AG04449 (cell line): ENCODE measurements at regions of chr21 and their contacts with region 1.

Region 1: DNA sequence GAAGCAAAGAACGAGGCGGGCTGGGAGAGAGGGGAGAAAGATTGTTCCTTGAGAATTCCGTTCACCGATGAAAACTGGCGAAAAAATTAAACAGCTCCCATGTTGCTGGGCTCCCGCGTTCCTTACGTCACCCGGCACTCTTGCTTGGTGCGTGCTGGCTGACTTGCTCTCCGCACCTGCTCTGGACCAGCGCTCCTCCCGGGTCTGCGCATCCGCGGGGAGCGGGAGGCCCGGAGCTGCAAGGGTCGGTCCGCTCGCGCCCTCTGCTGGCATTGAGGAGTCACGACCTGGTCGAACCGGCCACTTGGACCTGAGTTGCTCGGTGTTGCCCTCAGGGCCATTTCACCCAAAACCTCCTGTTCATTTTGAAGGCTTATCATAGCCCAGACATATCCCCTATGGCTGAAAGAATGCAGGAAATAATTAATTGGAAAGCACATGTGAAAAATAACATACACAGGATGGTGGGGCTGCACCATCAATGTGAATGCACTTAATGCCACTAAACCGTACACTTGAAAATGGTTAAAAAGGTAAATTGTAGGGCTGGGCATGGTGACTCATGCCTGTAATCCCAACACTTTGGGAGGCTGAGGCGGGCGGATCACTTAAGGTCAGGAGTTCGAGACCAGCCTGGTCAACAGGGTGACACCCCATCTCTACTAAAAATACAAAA is 98.9 kb upstream of the BACE2 start:
- DNase-seq: no peak
- H3K4me3 ChIP-seq: no peak overlapping the region; the same call in 1 of the 2 replicates
- CTCF ChIP-seq: peak; percentile 98

Region 2: DNA sequence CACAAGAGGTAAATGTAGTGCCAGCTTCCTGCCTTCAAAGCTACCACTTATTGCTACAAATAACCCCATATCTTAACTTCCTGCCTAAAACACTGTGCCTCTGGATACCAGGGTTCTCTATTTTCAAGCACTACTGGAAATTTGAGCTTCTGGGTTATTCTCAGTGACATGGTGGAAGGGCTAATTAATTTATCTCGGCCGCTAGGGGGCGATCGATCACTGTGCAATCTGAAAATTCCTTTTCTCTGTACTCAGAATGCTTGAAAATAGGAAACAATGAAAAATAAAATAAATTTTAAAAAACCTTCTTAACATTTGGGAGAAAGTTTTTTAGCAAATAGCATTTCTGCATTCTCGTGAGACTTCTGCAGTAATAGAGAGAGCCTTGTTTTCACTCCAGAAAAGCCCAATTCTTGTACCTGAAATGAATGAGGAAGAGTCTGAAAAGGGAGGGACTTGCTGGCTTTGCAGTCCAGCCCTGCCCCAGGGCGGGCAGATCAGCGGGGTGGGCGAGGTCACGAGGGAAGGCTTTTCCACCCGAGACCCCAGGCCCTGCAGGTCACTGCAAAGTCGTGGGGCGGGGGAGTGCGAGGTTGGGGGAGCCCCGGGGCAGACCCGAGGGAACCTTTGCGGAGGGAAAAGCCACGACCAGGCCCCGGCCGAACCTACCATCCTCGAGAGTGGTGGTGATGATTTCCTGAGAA is 925.1 kb before region 1 on chr21:
- CTCF ChIA-PET with region 1: interaction called, 15 read pairs
- POLR2A ChIA-PET with region 1: no interaction called
- DNase-seq: no peak
- H3K4me3 ChIP-seq: no peak overlapping the region
- CTCF ChIP-seq: peak; percentile 40

Region 3: DNA sequence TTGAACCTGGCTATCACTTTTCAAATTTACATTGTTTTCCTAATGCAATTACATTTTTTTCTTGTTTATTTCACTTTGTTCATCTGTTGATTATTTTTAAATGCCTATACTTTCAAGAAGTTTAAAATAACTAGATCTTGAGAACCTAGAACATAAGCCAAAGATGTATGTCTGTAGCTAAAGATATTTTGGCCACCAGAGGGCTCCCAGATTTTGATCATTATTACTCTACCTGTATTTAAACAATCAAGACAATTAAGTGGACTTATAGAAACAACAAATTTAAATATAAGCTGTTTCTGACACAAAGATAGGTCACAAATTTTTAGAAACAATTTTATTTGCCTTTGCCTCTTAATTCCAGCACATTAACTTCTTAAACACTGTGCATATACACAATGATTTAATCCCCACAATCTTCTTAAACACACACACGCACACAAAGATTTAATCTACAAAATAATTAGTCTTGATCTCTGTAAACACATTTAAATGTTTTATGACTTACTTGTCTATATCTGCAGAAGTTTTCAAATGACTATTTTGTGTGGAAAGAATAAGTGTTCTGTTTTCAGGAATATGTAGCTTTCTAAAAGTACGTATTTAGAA is 602.1 kb before region 1 on chr21:
- CTCF ChIA-PET with region 1: interaction called, 27 read pairs
- POLR2A ChIA-PET with region 1: no interaction called
- DNase-seq: no peak
- H3K4me3 ChIP-seq: no peak overlapping the region
- CTCF ChIP-seq: peak; percentile 30

Region 4: GRCh38 chr21:40772831-40773230 is 296.3 kb before region 1 on chr21:
- CTCF ChIA-PET with region 1: no interaction called
- POLR2A ChIA-PET with region 1: no interaction called
- DNase-seq: no peak
- H3K4me3 ChIP-seq: no peak overlapping the region
- CTCF ChIP-seq: no peak

Region 5: GRCh38 chr21:41079159-41079558 is 10.1 kb after region 1 on chr21:
- CTCF ChIA-PET with region 1: interaction called, 19 read pairs
- POLR2A ChIA-PET with region 1: no interaction called
- DNase-seq: no peak
- H3K4me3 ChIP-seq: no peak overlapping the region
- CTCF ChIP-seq: no peak